ENCODE measurements at regions of chr16 and their contacts with region 1.

Region 1: DNA sequence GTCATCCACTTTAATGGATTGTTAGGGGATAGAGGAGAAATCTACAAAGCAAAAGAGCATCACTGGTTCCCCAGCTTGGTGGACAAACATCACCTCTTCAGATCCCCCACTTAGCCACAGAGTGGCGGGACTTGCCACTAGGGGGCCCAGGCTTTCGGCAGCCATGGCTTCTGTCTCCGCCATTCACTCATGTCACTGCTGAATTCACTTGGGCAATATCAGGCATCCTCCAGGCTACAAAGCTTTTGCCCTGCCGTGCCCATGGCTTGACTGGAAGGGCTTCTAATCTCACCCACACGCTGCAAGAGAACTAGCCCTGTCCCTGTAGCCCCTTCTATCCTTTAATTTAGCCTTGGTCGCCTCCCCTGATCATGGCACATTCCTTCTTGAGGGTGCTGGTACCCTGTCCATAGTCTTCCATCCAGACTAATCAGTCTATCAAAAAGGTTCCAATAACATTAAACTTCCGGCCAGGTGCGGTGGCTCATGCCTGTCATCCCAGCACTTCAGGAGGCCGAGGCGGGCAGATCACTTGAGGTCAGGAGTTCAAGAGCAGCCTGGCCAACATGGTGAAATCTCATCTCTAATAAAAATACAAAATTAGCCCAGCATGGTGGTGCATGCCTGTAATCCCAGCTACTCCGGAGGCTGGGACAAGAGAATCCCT is 34.8 kb downstream of the SBK1 start:
- DNase-seq: no peak
- H3K4me3 ChIP-seq: no peak overlapping the region
- CTCF ChIP-seq: peak; percentile 87

Region 2: GRCh38 chr16:28136751-28137434 is 190.2 kb before region 1 on chr16:
- CTCF ChIA-PET with region 1: no interaction called
- POLR2A ChIA-PET with region 1: no interaction called
- DNase-seq: no peak
- H3K4me3 ChIP-seq: no peak overlapping the region
- CTCF ChIP-seq: no peak

Region 3: DNA sequence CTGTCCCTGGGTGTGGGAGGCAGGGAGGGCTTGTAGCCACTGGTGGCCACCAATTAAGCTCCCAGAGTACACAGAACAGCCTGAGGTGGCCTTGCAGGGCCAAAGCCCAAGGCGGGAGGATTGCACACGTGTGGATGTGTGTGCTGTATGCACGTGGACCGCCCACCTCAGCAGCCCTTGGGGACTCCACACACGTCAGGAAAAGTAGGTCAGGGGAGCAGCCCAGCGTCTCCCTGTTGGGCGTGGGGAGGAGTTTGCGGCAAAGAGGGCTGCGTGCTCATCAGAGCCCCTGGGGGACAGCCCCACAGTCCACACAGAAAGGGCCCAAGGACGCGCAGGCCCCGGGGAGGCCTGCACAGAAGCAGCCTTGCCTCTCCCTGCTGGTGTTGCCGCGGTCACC is 15.2 kb before region 1 on chr16:
- CTCF ChIA-PET with region 1: interaction called, 13 read pairs
- POLR2A ChIA-PET with region 1: no interaction called
- DNase-seq: no peak
- H3K4me3 ChIP-seq: no peak overlapping the region
- CTCF ChIP-seq: no peak

Measured in AG04449 (cell line).